Activated T-helper 2 cell treated with anti-CD3 and anti-CD28 coated beads, Interferon-gamma antibody, Interleukin-2, Interleukin-4, amounts not matched to agents 10 μg/mL and 5 μg/mL and 100 μg/mL, durations not matched to agents 14 hours and 24 hours and 36 hours (primary cell): ENCODE measurements at regions of chr5 and their contacts with region 1.

Region 1: DNA sequence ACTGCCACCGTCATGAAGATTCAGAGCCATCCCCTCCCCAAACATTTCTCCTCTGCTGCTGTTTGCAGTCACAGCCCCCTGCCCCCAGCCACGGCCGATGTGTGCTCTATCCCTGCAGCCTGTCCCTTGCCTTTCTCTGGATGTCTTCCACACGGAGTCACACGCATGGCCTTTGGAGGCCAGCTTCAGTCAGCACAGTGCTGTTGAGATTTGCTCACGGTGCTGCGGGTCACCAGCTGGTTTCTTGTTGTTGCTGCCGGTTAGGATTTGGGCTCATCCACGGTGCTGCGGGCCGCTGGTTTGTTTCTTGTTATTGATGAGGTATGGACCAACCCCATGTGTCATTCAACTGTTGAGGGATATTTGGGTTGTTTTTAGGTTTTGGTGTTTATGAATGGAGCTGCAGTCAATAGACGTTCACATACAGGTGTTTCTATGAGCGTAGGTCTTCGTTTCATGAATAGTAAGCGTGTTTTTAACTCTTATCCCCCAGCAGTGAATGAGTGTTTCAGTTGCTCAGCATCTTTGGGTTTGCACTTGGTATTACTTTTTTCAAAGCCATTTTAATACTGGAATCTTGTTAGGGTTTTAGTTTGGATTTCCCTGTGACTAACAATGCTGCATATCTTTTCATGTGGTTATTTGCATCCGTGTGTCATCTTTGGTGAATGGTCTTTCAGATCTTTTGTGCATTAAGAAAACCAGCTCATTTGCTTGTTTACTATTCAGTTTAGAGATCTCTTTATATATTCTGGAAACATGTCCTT is 57.6 kb downstream of the AHRR start:
- DNase-seq: peak; percentile 8
- H3K4me3 Mint-ChIP-seq: peak overlapping the region; percentile 51
- H3K27ac Mint-ChIP-seq: peak overlapping the region; percentile 87
- H3K4me1 Mint-ChIP-seq: peaks cover 64% of the 10 kb centered on the region
- H3K27me3 Mint-ChIP-seq: no peaks in the 10 kb centered on the region

Region 2: DNA sequence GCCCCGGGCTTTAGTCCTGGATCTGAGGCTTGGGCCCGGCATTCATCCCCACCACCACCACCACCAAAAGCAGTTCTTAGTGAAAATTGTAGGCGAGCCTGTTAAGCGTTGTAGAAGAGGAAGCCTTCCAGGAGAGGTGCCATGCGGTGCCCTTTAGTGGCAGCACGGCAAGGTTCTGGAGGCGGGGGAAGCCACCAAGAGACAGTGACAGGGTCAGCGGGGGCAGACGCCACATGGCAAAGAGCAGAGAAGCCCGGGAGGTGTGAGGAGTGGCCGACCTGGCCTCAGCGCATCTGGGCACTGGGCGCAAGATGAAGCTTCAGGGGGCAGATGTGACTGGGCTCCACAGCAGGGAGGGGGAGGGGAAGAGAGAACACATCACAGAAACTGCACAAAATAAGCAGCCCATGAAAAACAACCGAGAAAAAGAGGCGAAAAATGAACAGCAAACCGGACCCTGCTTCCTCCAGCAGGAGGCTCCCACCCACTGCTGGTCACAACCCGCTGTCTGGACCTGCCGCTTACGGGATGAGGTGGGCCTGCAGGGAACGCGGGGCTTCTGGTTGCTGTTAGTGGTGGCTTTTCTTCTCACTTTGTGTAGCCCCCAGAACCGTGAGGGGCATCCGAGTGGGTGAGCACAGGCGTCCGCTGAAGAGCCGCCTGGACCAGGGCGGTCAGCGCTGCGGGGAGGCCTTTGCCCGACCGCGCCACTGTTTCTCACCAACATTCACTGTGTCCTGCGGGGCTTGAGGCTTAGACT is 183.6 kb before region 1 on chr5:
- intact Hi-C with region 1: no loop called
- DNase-seq: no peak
- H3K4me3 Mint-ChIP-seq: no peak overlapping the region
- H3K27ac Mint-ChIP-seq: no peak overlapping the region
- H3K4me1 Mint-ChIP-seq: peaks cover 2% of the 10 kb centered on the region
- H3K27me3 Mint-ChIP-seq: peaks cover 2% of the 10 kb centered on the region

Region 3: GRCh38 chr5:317086-317811 is 61.9 kb before region 1 on chr5:
- intact Hi-C with region 1: no loop called
- DNase-seq: no peak
- H3K4me3 Mint-ChIP-seq: no peak overlapping the region
- H3K27ac Mint-ChIP-seq: no peak overlapping the region
- H3K4me1 Mint-ChIP-seq: peaks cover 4% of the 10 kb centered on the region
- H3K27me3 Mint-ChIP-seq: peaks cover 6% of the 10 kb centered on the region

Region 4: GRCh38 chr5:392431-392988 is 13.4 kb after region 1 on chr5:
- intact Hi-C with region 1: loop called (anchors 1 kb)
- DNase-seq: peak; percentile 88
- H3K4me3 Mint-ChIP-seq: peak overlapping the region; percentile 72
- H3K27ac Mint-ChIP-seq: peak overlapping the region; percentile 97
- H3K4me1 Mint-ChIP-seq: peaks cover 40% of the 10 kb centered on the region
- H3K27me3 Mint-ChIP-seq: no peaks in the 10 kb centered on the region